Activated B cell treated with CpG ODN at 0.5 μM for 24 hours (primary cell): ENCODE measurements at regions of chr19 and their contacts with region 1.

Region 1: GRCh38 chr19:37172368-37173366 is at the start of gene ZNF585A:
- DNase-seq: peak; percentile 77
- ATAC-seq: peak; percentile 99
- H3K4me3 Mint-ChIP-seq: peak within 1 kb of the TSS; percentile 52
- H3K27ac Mint-ChIP-seq: no peak within 1 kb of the TSS
- H3K4me1 Mint-ChIP-seq: peaks cover 4% of the 10 kb centered on the region
- H3K27me3 Mint-ChIP-seq: no peaks in the 10 kb centered on the region
- CTCF ChIP-seq: no peak
- total RNA-seq, gene ZNF585A: 14.4 and 17.0 TPM in 2 replicates

Region 2: DNA sequence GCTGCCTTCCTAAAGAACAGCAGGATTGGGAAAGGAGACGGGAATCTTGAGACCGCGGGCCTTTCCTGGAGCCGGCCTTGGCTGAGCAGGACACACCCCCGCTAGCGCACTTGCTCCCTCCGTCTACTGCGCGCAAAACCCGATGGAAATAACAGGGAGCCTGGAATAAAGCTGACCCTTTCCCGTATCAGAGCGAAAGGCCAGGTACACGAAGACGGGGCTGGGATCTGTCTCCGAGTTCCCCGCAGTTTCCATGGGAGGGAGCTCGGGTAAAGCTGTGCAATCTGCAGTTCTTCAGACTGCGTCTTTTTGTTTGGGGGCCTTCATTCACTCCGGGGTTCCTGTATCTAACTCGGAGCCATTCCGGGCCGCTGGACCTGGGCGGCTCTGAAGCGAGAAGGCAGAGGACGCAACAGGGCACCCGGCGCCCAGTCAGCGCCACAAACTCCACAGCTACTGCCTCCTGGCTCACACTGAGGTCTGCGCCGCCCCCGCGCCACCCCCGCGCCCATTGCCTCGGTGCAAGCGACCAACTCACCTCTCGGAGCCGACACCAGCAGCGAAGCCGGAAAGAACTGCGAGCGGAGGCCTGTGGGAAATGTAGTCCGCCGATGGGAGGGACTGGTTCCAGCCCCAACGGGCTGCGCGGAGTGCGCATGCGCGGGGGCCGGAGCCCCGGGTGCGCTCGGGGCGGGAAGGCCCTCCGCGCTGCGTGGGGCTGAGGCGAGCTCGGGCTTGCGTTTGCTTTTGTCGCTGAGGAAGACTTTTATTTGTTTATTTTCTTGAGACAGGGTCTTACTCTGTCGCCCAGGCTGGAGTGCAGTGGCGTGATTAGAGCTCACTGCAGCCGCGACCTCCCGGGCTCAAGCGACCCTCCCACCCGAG is 793.8 kb before region 1 on chr19 and contains the start of gene ZFP14:
- CTCF ChIA-PET with region 1: no interaction called
- POLR2A ChIA-PET with region 1: no interaction called
- intact Hi-C with region 1: loop called (anchors 1 kb)
- DNase-seq: peak; percentile 92
- ATAC-seq: peak; percentile 99
- H3K4me3 Mint-ChIP-seq: peak within 1 kb of the TSS; percentile 94
- H3K27ac Mint-ChIP-seq: peak within 1 kb of the TSS; percentile 96
- H3K4me1 Mint-ChIP-seq: peaks cover 21% of the 10 kb centered on the region
- H3K27me3 Mint-ChIP-seq: no peaks in the 10 kb centered on the region
- CTCF ChIP-seq: no peak
- total RNA-seq, gene ZFP14: 7.7 and 10.4 TPM in 2 replicates

Region 3: DNA sequence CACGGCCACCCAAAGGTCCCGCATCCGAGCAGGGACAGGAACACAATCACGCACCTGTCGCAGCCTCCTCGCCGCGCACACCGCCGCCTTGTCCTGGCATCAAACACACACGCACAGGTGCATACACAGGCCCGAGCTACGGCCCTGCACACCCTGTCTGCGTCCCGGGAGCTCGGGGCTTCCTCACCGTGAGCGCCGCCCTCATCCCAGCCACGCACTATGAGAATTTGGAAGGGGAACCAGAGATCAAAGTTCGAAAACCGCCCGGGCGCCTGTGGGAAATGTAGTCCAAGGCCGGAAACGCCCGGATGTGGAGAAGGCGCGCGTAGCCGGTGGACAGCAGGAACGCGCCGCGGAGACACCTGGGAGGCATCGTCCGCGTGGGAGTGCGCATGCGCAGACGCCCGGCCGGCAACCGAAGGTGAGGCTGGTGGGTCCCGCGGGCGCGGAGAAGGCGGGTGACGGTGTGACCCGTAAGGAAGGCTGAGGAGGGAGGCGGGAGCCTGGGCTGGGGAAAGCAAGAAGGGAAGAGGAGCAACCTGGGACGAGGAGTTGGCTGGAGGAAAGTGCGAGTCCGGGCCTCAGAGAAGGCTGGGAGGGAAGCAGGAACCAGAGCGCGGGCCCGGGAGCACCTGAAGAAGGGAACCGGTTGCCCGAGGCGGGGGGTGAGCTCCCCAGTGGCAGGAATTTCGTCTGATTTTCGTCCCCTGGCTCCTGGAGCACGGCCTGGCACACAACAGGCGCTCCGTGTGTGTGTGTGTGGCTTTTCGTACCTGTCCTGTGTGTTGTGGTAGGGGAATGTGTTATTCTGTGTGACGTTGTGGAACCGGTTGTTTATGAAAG is 485.2 kb before region 1 on chr19 and contains the start of gene ZNF567:
- CTCF ChIA-PET with region 1: no interaction called
- POLR2A ChIA-PET with region 1: no interaction called
- intact Hi-C with region 1: loop called (anchors 1 kb)
- DNase-seq: peak; percentile 95
- ATAC-seq: peak; percentile 93
- H3K4me3 Mint-ChIP-seq: peak within 1 kb of the TSS; percentile 98
- H3K27ac Mint-ChIP-seq: peak within 1 kb of the TSS; percentile 89
- H3K4me1 Mint-ChIP-seq: peaks cover 34% of the 10 kb centered on the region
- H3K27me3 Mint-ChIP-seq: no peaks in the 10 kb centered on the region
- CTCF ChIP-seq: no peak
- total RNA-seq, gene ZNF567: 13.3 and 15.0 TPM in 2 replicates

Region 4: GRCh38 chr19:36796076-36796992 is 376.3 kb before region 1 on chr19:
- CTCF ChIA-PET with region 1: no interaction called
- POLR2A ChIA-PET with region 1: no interaction called
- intact Hi-C with region 1: loop called (anchors 1 kb)
- DNase-seq: no peak
- ATAC-seq: no peak
- H3K4me3 Mint-ChIP-seq: peak overlapping the region; percentile 96
- H3K27ac Mint-ChIP-seq: peak overlapping the region; percentile 99
- H3K4me1 Mint-ChIP-seq: peaks cover 24% of the 10 kb centered on the region
- H3K27me3 Mint-ChIP-seq: peaks cover 4% of the 10 kb centered on the region
- CTCF ChIP-seq: no peak

Region 5: GRCh38 chr19:37007587-37008220 is 165.0 kb before region 1 on chr19:
- CTCF ChIA-PET with region 1: no interaction called
- POLR2A ChIA-PET with region 1: no interaction called
- intact Hi-C with region 1: no loop called
- DNase-seq: peak; percentile 31
- ATAC-seq: peak; percentile 49
- H3K4me3 Mint-ChIP-seq: peak overlapping the region; percentile 81
- H3K27ac Mint-ChIP-seq: peak overlapping the region; percentile 24
- H3K4me1 Mint-ChIP-seq: peaks cover 2% of the 10 kb centered on the region
- H3K27me3 Mint-ChIP-seq: no peaks in the 10 kb centered on the region
- CTCF ChIP-seq: no peak

Region 6: GRCh38 chr19:37114020-37114419 is 58.6 kb before region 1 on chr19:
- CTCF ChIA-PET with region 1: no interaction called
- POLR2A ChIA-PET with region 1: no interaction called
- intact Hi-C with region 1: no loop called
- DNase-seq: no peak
- ATAC-seq: no peak
- H3K4me3 Mint-ChIP-seq: no peak overlapping the region
- H3K27ac Mint-ChIP-seq: no peak overlapping the region
- H3K4me1 Mint-ChIP-seq: no peaks in the 10 kb centered on the region
- H3K27me3 Mint-ChIP-seq: no peaks in the 10 kb centered on the region
- CTCF ChIP-seq: no peak

Region 7: DNA sequence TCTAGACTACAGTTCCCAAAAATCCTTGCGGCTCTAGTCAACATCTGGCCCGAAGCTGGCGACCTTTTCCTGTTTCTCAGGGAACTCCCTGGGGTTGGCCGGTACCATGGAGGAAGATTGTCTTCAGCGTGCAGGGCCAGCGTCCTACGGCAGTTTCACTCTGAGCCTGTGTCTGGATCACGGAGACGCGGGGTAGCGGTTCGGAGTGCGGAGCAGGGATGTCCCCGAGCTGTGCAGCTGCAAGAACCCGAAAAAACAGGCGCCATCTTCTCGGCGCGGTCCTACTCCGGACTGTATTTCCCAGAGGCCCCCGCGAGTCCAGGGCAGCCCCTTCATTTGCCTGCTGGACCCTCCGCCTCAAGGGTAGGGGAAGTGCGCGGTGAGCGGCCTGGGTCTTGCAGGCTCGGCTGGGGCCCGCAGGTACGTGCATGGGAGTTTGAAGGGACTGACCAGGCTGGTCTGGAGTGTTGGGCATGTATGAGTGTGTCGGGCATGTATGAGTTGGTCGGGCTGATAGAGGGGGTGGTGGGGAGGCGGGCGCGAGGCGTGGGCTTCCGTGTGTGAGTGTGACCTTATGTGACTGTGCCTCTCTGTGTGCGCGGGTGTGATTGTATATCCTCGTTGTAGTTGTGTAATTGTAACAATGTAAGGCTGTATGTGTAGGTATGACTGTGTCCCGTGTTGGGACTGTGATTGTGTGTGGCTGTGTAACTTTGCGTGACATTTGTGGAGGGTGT is 45.4 kb after region 1 on chr19 and contains the start of gene ZNF383:
- CTCF ChIA-PET with region 1: no interaction called
- POLR2A ChIA-PET with region 1: interaction called, 17 read pairs
- intact Hi-C with region 1: loop called (anchors 1 kb)
- DNase-seq: peak; percentile 81
- ATAC-seq: peak; percentile 89
- H3K4me3 Mint-ChIP-seq: peak within 1 kb of the TSS; percentile 98
- H3K27ac Mint-ChIP-seq: peak within 1 kb of the TSS; percentile 99
- H3K4me1 Mint-ChIP-seq: peaks cover 26% of the 10 kb centered on the region
- H3K27me3 Mint-ChIP-seq: no peaks in the 10 kb centered on the region
- CTCF ChIP-seq: no peak
- total RNA-seq, gene ZNF383: 19.9 and 25.5 TPM in 2 replicates

Region 8: GRCh38 chr19:37594304-37594981 is 421.8 kb after region 1 on chr19 and contains the starts of genes ZNF540 and ZNF571:
- CTCF ChIA-PET with region 1: no interaction called
- POLR2A ChIA-PET with region 1: no interaction called
- intact Hi-C with region 1: loop called (anchors 1 kb)
- DNase-seq: peak; percentile 83
- ATAC-seq: peak; percentile 97
- H3K4me3 Mint-ChIP-seq: peak within 1 kb of the TSS; percentile 98
- H3K27ac Mint-ChIP-seq: peak within 1 kb of the TSS; percentile 97
- H3K4me1 Mint-ChIP-seq: peaks cover 23% of the 10 kb centered on the region
- H3K27me3 Mint-ChIP-seq: no peaks in the 10 kb centered on the region
- CTCF ChIP-seq: no peak
- total RNA-seq, gene ZNF540: 1.9 and 2.9 TPM in 2 replicates
- total RNA-seq, gene ZNF571: 5.0 and 5.2 TPM in 2 replicates